CD4-positive, alpha-beta memory T cell (primary cell): ENCODE measurements at regions of chr12 and their contacts with region 1.

Region 1: GRCh38 chr12:15532364-15532977 is 210.2 kb downstream of the PTPRO start:
- DNase-seq: peak in 4 of 5 donors; percentile 60 to 67 (median 64)
- H3K4me3 ChIP-seq: no peak overlapping the region
- H3K4me3 Mint-ChIP-seq: peak overlapping the region in 3 of 8 donors; percentile 49 to 75 (median 61)
- H3K27ac ChIP-seq: no peak overlapping the region
- H3K27ac Mint-ChIP-seq: peak overlapping the region in 3 of 7 donors; percentile 39 to 74 (median 60)
- H3K4me1 ChIP-seq: peaks cover 36% of the 10 kb centered on the region
- H3K4me1 Mint-ChIP-seq: peaks cover 8 to 14% (median 11%) of the 10 kb centered on the region in 4 donors
- H3K27me3 ChIP-seq: no peaks in the 10 kb centered on the region
- H3K27me3 Mint-ChIP-seq: no peaks in the 10 kb centered on the region

Region 2: DNA sequence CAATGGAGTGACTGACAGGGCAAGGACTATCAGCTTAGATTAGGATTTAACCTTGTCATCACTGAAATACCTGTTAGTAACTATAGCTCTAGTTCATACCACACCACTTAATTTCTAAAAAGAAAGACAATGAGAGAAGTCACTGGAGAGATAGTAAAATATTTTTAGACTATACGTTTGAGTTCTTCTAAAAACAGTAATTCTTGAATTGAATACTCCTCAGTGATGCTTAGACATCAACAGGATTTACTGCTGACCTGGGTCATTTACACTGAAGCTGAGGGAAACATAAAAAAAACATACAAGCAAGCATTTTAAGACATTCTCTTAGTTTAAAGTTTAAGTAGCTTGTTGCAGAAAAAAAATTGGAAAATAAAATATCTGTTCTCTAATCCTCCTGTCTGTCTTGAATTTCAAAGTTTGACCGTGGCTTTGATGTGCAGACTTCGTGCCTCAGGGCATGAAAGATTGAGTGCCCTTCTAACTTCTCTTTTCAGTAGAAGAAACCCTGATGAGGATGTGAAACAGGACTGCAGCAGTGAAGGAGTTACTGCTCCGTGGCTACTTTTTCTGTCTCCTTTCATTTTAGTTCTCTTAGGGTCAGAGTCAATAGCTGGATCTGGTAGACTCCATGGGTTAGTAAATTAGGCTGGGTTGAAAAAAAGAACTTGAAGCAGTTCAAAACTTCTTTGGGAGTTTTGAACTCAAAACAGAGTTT is 38.0 kb before region 1 on chr12:
- CTCF ChIA-PET with region 1: no interaction called
- POLR2A ChIA-PET with region 1: no interaction called
- intact Hi-C with region 1: no loop called
- DNase-seq: no peak
- H3K4me3 ChIP-seq: no peak overlapping the region
- H3K4me3 Mint-ChIP-seq: no peak overlapping the region
- H3K27ac ChIP-seq: no peak overlapping the region
- H3K27ac Mint-ChIP-seq: no peak overlapping the region
- H3K4me1 ChIP-seq: no peaks in the 10 kb centered on the region
- H3K4me1 Mint-ChIP-seq: peaks cover 0 to 3% (median 2%) of the 10 kb centered on the region in 4 donors
- H3K27me3 ChIP-seq: no peaks in the 10 kb centered on the region
- H3K27me3 Mint-ChIP-seq: peaks cover 11 to 14% of the 10 kb centered on the region in 2 donors

Region 3: DNA sequence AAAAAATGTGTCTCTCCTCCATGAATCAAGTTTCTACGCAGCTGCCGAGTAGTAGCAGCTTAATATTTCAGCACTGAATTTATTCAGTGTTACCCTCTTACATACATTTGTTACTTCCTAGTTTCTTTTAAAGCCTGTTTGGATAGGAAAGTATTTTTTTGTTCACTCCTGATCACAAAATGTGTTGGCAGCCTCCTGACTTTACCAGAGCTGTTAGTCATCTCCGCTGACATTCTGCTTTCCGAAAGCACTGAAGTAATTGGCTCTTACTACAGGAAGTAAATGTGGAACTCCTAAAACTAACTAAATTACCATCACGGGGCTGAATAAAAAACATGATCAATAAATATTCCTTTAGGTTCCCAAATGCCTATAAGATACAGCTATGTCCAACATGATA is 31.2 kb after region 1 on chr12:
- CTCF ChIA-PET with region 1: interaction called, 70 read pairs
- POLR2A ChIA-PET with region 1: interaction called, 22 read pairs
- intact Hi-C with region 1: loop called (anchors 1 kb)
- DNase-seq: peak in 4 of 5 donors; percentile 33 to 41 (median 34)
- H3K4me3 ChIP-seq: peak overlapping the region; percentile 7 to 33
- H3K4me3 Mint-ChIP-seq: peak overlapping the region; percentile 58 to 83 (median 78)
- H3K27ac ChIP-seq: peak overlapping the region; percentile 43
- H3K27ac Mint-ChIP-seq: peak overlapping the region; percentile 80 to 93 (median 90)
- H3K4me1 ChIP-seq: peaks cover 54% of the 10 kb centered on the region
- H3K4me1 Mint-ChIP-seq: peaks cover 28 to 44% (median 39%) of the 10 kb centered on the region in 4 donors
- H3K27me3 ChIP-seq: no peaks in the 10 kb centered on the region
- H3K27me3 Mint-ChIP-seq: no peaks in the 10 kb centered on the region

Region 4: GRCh38 chr12:15584366-15585041 is 52.0 kb after region 1 on chr12:
- CTCF ChIA-PET with region 1: interaction called, 394 read pairs
- POLR2A ChIA-PET with region 1: interaction called, 78 read pairs
- intact Hi-C with region 1: loop called (anchors 1 kb)
- DNase-seq: peak in 4 of 5 donors; percentile 47 to 51 (median 49)
- H3K4me3 ChIP-seq: no peak overlapping the region
- H3K4me3 Mint-ChIP-seq: no peak overlapping the region
- H3K27ac ChIP-seq: no peak overlapping the region
- H3K27ac Mint-ChIP-seq: no peak overlapping the region
- H3K4me1 ChIP-seq: no peaks in the 10 kb centered on the region
- H3K4me1 Mint-ChIP-seq: peaks cover 0 to 7% (median 4%) of the 10 kb centered on the region in 4 donors
- H3K27me3 ChIP-seq: no peaks in the 10 kb centered on the region
- H3K27me3 Mint-ChIP-seq: no peaks in the 10 kb centered on the region

Region 5: GRCh38 chr12:15789220-15790171 is 257.0 kb after region 1 on chr12 and contains the start of gene EPS8:
- CTCF ChIA-PET with region 1: interaction called, 7 read pairs
- POLR2A ChIA-PET with region 1: interaction called, 3 read pairs
- intact Hi-C with region 1: loop called (anchors 5 kb)
- DNase-seq: peak; percentile 85 to 90 (median 90)
- H3K4me3 ChIP-seq: peak within 1 kb of the TSS; percentile 58 to 78
- H3K4me3 Mint-ChIP-seq: peak within 1 kb of the TSS; percentile 90 to 98 (median 96)
- H3K27ac ChIP-seq: peak within 1 kb of the TSS; percentile 38
- H3K27ac Mint-ChIP-seq: peak within 1 kb of the TSS; percentile 86 to 93 (median 90)
- H3K4me1 ChIP-seq: peaks cover 19% of the 10 kb centered on the region
- H3K4me1 Mint-ChIP-seq: peaks cover 12 to 19% (median 15%) of the 10 kb centered on the region in 4 donors
- H3K27me3 ChIP-seq: peaks cover 21% of the 10 kb centered on the region
- H3K27me3 Mint-ChIP-seq: peaks cover 12 to 29% of the 10 kb centered on the region in 2 donors
- total RNA-seq, gene EPS8: 2.6 to 3.8 TPM

Region 6: GRCh38 chr12:15899282-15899870 is 366.9 kb after region 1 on chr12:
- CTCF ChIA-PET with region 1: interaction called, 5 read pairs
- POLR2A ChIA-PET with region 1: no interaction called
- intact Hi-C with region 1: loop called (anchors 5 kb)
- DNase-seq: peak in 4 of 5 donors; percentile 32 to 47 (median 34)
- H3K4me3 ChIP-seq: no peak overlapping the region
- H3K4me3 Mint-ChIP-seq: no peak overlapping the region
- H3K27ac ChIP-seq: no peak overlapping the region
- H3K27ac Mint-ChIP-seq: peak overlapping the region in 5 of 7 donors; percentile 25 to 85 (median 69)
- H3K4me1 ChIP-seq: no peaks in the 10 kb centered on the region
- H3K4me1 Mint-ChIP-seq: peaks cover 7 to 12% (median 8%) of the 10 kb centered on the region in 4 donors
- H3K27me3 ChIP-seq: no peaks in the 10 kb centered on the region
- H3K27me3 Mint-ChIP-seq: no peaks in the 10 kb centered on the region